Common myeloid progenitor, CD34-positive (primary cell): ENCODE measurements at regions of chr14 and their contacts with region 1.

Region 1: DNA sequence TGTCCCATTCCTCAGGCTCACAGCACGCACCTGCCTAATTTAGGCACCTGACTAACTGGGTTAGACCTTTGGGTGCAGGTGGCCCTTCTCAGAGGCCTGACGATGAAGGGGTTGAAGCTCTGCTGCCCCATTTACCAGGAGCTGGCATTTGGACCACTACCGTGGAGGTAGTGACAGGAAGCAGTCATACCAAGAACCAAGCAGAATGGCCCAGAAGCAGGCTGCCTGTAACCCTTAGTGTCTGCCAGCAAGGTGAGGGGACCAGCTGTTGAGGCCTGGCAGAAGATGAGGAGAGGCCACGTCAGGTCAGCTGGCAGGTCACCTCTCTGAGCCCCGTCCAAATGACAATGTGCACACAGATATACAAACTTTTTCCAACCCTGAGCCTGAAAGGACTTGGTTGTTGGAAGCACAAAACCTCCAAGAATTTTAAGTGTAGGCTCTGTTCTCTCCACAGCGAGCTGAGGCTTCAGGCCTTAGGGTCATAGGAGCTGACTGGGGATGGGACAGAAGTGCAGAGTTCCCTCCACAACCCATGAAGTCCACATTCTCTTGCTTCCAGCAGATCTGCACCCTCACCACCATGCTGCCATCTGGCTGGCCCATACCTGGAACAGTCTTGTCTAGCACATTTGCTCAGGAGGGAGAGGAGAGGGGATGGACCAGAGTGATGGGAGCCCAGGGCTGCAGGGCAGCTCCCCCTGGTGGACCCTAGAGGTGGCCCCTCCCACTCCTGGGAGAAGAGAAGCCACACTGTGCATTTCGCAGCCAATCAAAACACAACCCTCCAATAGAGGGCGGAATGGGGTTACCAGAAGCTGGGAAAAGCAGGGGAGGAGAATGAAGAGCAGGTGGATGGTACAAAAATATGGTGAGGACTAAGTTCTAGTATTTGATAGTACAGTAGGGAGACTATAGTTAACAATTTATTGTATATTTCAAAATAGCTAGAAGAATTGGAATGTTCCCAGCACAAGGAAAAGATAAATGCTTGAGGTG is 23.3 kb downstream of the VASH1 start:
- DNase-seq: peak; percentile 80 to 88 (median 84)
- H3K4me3 ChIP-seq: no peak overlapping the region
- H3K27ac ChIP-seq: no peak overlapping the region
- H3K4me1 ChIP-seq: peaks cover 0 to 33% (median 25%) of the 10 kb centered on the region in 4 experiments
- H3K27me3 ChIP-seq: no peaks in the 10 kb centered on the region

Region 2: DNA sequence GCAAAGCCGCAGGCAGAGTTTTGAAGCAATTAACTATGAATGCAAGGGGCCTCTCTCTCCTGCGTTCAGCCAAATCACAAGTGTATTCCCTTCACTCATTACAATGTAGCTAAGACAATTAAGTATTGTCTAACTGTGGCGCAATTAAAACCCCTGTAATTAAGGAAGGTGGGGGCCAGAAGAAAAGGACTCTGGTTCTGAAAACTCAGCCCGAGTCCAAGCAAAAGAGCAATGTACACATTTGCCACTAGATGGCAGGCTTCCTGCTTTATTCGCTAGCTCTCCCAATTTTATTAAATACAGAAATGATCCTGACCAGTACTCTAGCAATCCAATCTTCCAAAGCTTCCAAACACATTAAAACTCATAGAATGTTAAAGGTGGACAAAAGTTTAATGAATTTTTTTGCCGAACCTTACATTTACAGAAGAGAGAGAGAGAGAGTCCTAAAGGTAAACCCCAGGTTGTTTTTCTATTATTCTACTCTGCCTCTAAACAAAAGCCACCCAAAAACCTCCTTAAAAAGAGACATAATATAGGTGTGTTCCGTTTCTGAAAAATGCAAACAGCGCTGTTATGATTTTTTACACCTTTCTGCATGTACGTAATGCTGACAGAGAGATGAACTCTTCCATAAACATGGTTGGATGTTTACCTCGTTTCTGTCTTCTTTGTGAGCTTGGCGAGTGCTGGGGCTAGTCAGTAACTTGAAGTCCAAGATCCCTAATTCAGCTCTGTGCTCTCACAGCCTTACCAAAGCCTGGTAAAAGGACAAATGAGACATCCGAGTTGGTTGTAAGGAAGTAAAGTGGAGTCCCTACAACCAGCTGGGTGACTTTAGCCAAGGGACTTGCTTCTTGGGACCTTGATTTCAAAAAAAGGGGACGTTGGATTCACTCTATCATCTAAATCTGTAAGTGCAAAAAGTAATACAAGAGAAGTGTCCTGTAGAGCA is 74.2 kb before region 1 on chr14:
- CTCF ChIA-PET with region 1: interaction called, 520 read pairs
- POLR2A ChIA-PET with region 1: interaction called, 7 read pairs
- DNase-seq: peak; percentile 46 to 68 (median 55)
- H3K4me3 ChIP-seq: no peak overlapping the region
- H3K27ac ChIP-seq: no peak overlapping the region
- H3K4me1 ChIP-seq: no peaks in the 10 kb centered on the region
- H3K27me3 ChIP-seq: no peaks in the 10 kb centered on the region

Region 3: GRCh38 chr14:76752744-76753143 is 31.8 kb before region 1 on chr14:
- CTCF ChIA-PET with region 1: interaction called, 14 read pairs
- POLR2A ChIA-PET with region 1: no interaction called
- DNase-seq: no peak
- H3K4me3 ChIP-seq: no peak overlapping the region
- H3K27ac ChIP-seq: no peak overlapping the region
- H3K4me1 ChIP-seq: no peaks in the 10 kb centered on the region
- H3K27me3 ChIP-seq: no peaks in the 10 kb centered on the region

Region 4: GRCh38 chr14:76767681-76768656 is 16.6 kb before region 1 on chr14:
- CTCF ChIA-PET with region 1: interaction called, 200 read pairs
- POLR2A ChIA-PET with region 1: interaction called, 17 read pairs
- DNase-seq: peak; percentile 96 to 100 (median 99)
- H3K4me3 ChIP-seq: peak overlapping the region in 3 of 7 experiments; percentile 26 to 46 (median 43)
- H3K27ac ChIP-seq: peak overlapping the region; percentile 50 to 78
- H3K4me1 ChIP-seq: peaks cover under 1 to 54% (median 50%) of the 10 kb centered on the region in 4 experiments
- H3K27me3 ChIP-seq: peaks cover 0 to 3% (median under 1%) of the 10 kb centered on the region in 5 experiments

Region 5: DNA sequence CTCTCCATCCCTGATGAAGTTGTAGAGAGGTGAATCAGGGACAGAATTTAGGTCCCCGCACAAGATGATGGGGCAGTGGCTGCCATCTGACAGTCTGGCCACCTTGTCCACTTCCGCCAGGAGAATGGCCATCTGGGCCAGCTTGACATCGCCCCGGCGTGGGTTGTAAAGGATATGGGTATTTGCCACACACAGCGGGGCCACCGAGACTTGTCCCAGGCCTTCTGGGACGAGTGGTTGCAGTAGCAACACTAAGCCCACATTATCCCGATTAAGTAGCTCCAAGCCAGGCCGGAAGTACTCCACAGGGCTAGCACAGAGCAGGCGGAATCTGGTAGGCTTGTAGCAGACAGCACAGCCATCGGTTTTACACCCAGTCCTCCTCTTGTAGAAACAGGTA is 21.9 kb after region 1 on chr14:
- CTCF ChIA-PET with region 1: interaction called, 69 read pairs
- POLR2A ChIA-PET with region 1: interaction called, 3 read pairs
- DNase-seq: no peak
- H3K4me3 ChIP-seq: no peak overlapping the region
- H3K27ac ChIP-seq: no peak overlapping the region
- H3K4me1 ChIP-seq: peaks cover 7 to 25% (median 10%) of the 10 kb centered on the region in 4 experiments
- H3K27me3 ChIP-seq: no peaks in the 10 kb centered on the region